GM12878 (cell line): ENCODE measurements at regions of chr10 and their contacts with region 1.

Region 1: GRCh38 chr10:71893920-71894319 is 42.9 kb upstream of the PSAP start:
- DNase-seq: no peak
- ATAC-seq: no peak
- H3K4me3 ChIP-seq: no peak overlapping the region
- H3K27ac ChIP-seq: no peak overlapping the region
- H3K4me1 ChIP-seq: peaks cover 16% of the 10 kb centered on the region
- H3K27me3 ChIP-seq: no peaks in the 10 kb centered on the region
- CTCF ChIP-seq: no peak
- EP300 ChIP-seq: no peak
- POLR2A ChIP-seq: no peak
- RAD21 ChIP-seq: no peak

Region 2: GRCh38 chr10:71696628-71697326 is 197.1 kb before region 1 on chr10:
- CTCF ChIA-PET with region 1: interaction called, 13 read pairs
- POLR2A ChIA-PET with region 1: no interaction called
- RAD21 ChIA-PET with region 1: interaction called, 9 read pairs
- SMC1A ChIA-PET with region 1: interaction called, 6 read pairs
- in situ Hi-C with region 1: no loop called
- intact Hi-C with region 1: loop called (anchors 10 kb)
- DNase-seq: no peak
- ATAC-seq: peak; percentile 56
- H3K4me3 ChIP-seq: no peak overlapping the region
- H3K27ac ChIP-seq: no peak overlapping the region
- H3K4me1 ChIP-seq: peaks cover 64% of the 10 kb centered on the region
- H3K27me3 ChIP-seq: no peaks in the 10 kb centered on the region
- CTCF ChIP-seq: peak; percentile 77 to 98 (median 96)
- EP300 ChIP-seq: no peak
- POLR2A ChIP-seq: no peak
- RAD21 ChIP-seq: peak; percentile 61

Region 3: GRCh38 chr10:71812016-71812912 is 81.7 kb before region 1 on chr10:
- CTCF ChIA-PET with region 1: interaction called, 46 read pairs
- POLR2A ChIA-PET with region 1: no interaction called
- RAD21 ChIA-PET with region 1: interaction called, 9 read pairs
- SMC1A ChIA-PET with region 1: interaction called, 9 read pairs
- in situ Hi-C with region 1: no loop called
- intact Hi-C with region 1: no loop called
- DNase-seq: no peak
- ATAC-seq: peak; percentile 99
- H3K4me3 ChIP-seq: no peak overlapping the region
- H3K27ac ChIP-seq: no peak overlapping the region
- H3K4me1 ChIP-seq: peaks cover 3% of the 10 kb centered on the region; the same call in 1 of the 2 replicates
- H3K27me3 ChIP-seq: no peaks in the 10 kb centered on the region
- CTCF ChIP-seq: peak; percentile 81 to 89 (median 82)
- EP300 ChIP-seq: no peak
- POLR2A ChIP-seq: peak; percentile 32; the same call in 1 of the 2 replicates
- RAD21 ChIP-seq: peak; percentile 84

Region 4: GRCh38 chr10:71860243-71861029 is 33.5 kb before region 1 on chr10:
- CTCF ChIA-PET with region 1: interaction called, 12 read pairs
- POLR2A ChIA-PET with region 1: no interaction called
- RAD21 ChIA-PET with region 1: interaction called, 3 read pairs
- SMC1A ChIA-PET with region 1: interaction called, 5 read pairs
- in situ Hi-C with region 1: no loop called
- intact Hi-C with region 1: no loop called
- DNase-seq: no peak
- ATAC-seq: peak; percentile 95
- H3K4me3 ChIP-seq: no peak overlapping the region
- H3K27ac ChIP-seq: peak overlapping the region; percentile 49
- H3K4me1 ChIP-seq: peaks cover 19% of the 10 kb centered on the region
- H3K27me3 ChIP-seq: no peaks in the 10 kb centered on the region
- CTCF ChIP-seq: no peak
- EP300 ChIP-seq: no peak
- POLR2A ChIP-seq: no peak
- RAD21 ChIP-seq: no peak

Region 5: DNA sequence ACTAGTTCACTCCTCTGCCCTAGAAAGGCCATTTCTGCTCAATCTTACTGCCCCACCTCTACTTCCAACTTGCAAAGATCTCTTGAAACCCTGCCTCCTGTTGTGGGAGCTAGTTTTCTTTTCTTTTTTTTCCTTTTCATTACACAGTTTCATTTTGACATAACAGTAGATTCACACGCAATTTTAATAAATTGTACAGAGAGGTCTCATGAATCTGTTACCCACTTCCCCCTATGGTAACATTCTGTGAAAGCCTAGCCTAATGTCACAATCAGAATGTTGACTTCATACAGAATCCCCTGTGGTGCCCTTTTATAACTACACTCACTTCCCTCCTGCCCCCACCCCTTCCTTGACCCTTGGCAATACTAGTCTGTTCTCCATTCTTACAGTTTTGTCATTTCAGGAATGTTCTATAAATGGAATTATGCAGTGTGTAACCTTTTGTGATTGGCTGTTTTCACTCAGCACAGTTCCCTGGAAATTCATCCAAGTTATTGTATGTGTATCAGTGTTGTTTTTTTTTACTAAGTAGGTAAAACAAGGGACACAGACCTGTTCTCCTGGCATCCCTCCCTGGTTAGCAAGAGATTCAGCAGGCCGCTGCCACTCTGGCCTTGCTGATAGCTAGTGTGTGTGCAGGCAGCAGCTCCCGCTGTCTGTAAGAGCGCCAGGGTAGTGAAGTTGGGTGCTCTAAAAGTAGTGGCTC is 91.8 kb after region 1 on chr10:
- CTCF ChIA-PET with region 1: interaction called, 11 read pairs
- POLR2A ChIA-PET with region 1: no interaction called
- RAD21 ChIA-PET with region 1: interaction called, 5 read pairs
- SMC1A ChIA-PET with region 1: interaction called, 4 read pairs
- in situ Hi-C with region 1: no loop called
- intact Hi-C with region 1: no loop called
- DNase-seq: peak; percentile 73
- ATAC-seq: peak; percentile 83
- H3K4me3 ChIP-seq: no peak overlapping the region
- H3K27ac ChIP-seq: peak overlapping the region; percentile 88
- H3K4me1 ChIP-seq: peaks cover 40% of the 10 kb centered on the region
- H3K27me3 ChIP-seq: no peaks in the 10 kb centered on the region
- CTCF ChIP-seq: no peak
- EP300 ChIP-seq: 0 out of 4 replicates have a peak, but pooled peaks have one; percentile 41 to 55
- POLR2A ChIP-seq: no peak
- RAD21 ChIP-seq: no peak

Region 6: DNA sequence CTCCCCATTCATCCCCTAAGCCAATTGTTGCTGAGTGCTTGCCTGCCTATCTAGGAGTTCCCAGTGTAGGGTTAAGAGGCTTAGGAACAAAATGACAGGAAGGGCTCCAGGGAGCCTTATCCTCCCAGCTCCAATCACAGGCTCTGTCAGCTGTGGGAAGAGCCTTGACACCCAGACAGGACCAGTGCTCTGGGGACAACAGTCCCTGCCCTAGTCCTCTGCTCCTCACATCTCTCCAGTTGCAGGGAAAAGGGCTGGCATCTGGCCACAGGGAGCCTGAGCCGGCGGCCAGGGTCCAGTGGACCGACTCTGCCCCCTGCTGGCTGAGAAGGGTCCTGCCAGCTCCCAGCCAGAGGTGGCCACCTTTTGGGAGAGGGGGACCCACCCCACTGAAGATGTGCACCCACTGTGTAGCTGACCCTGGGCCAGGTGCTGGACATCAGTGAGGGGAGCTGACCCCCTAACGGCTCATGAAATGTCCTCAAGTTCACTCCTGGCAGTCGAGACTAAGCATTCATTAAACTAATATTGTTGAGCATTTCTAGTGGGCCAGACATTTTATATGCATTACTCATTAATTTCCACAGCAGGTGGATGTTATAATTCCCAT is 443.2 kb after region 1 on chr10:
- CTCF ChIA-PET with region 1: interaction called, 14 read pairs
- POLR2A ChIA-PET with region 1: no interaction called
- RAD21 ChIA-PET with region 1: interaction called, 13 read pairs
- SMC1A ChIA-PET with region 1: interaction called, 8 read pairs
- in situ Hi-C with region 1: loop called (anchors 10 kb)
- intact Hi-C with region 1: loop called (anchors 2 kb)
- DNase-seq: no peak
- ATAC-seq: peak; percentile 11; the same call in 1 of the 3 replicates
- H3K4me3 ChIP-seq: no peak overlapping the region
- H3K27ac ChIP-seq: peak overlapping the region; percentile 1; the same call in 1 of the 2 replicates
- H3K4me1 ChIP-seq: peaks cover 61% of the 10 kb centered on the region
- H3K27me3 ChIP-seq: no peaks in the 10 kb centered on the region
- CTCF ChIP-seq: peak; percentile 95 to 98 (median 96)
- EP300 ChIP-seq: no peak
- POLR2A ChIP-seq: peak; percentile 18; the same call in 1 of the 2 replicates
- RAD21 ChIP-seq: peak; percentile 91